ENCODE measurements at regions of chr11 and their contacts with region 1.

Region 1: DNA sequence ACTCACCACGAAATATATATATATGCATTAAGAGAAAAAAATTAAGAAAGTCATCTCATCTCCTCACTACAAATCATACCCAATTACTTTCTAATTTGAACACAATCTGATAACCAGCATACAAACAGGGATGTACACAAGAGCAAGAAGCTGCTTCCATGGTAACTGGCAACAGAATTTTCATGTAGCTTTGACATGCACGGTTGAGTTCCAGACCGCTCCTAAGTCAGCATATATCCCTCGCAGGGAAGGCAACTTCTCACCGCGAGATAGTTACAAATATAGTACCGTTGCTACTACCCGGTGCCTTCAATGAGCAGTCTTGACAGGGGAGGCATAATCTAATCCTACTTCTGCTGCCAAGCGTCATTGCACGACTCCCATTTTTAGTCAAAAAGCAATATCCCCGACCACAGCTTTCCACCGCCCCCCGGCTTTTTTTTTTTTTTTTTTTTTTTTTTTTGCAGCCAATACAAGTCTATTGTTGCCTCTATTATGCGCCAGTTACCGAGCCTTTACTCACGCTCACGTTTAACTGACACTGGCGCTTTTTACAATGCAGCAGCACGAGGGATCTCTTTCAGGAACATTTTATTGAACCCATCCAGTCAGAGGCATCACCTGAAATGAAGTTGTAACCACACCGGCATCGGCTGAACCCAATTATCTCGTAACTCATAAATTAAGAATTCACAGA is 2.2 kb downstream of the CADM1 start:
- DNase-seq: peak in 4 of 10 donors; percentile 16 to 69 (median 18)

Region 2: GRCh38 chr11:115334932-115335788 is 166.9 kb before region 1 on chr11:
- intact Hi-C with region 1: loop called (anchors 2 kb)
- DNase-seq: no peak

Region 3: GRCh38 chr11:115630214-115630613 is 128.2 kb after region 1 on chr11:
- intact Hi-C with region 1: no loop called
- DNase-seq: no peak

Region 4: DNA sequence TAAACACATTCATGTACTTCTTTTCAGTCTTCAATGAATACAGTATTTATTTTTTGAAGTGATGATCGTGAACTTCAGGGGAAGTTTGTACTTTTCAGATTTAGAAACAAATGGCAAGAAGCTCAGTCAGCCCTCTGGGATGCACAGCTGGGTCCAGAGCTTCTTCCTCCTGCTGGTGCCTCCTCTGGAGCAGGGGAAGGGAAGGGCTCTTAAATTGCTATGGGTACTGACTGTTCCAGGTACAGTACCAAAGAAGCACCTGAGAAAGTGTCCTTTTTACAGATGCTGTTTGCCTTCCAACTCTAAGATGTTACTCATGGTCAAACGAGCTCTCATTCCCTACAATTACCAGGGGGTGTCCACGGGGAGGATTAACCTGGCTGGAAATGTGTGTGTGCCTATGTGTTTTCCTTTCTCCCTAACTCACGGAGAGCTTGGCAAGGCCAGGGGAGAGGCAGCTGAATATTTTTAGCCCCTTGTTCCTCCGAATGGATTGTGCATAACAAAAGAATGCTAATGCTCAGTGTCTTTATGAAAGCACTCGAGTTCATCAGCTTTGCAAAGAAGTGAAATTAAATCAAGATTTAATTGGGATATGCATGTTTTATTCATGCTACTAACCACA is 315.9 kb after region 1 on chr11:
- intact Hi-C with region 1: no loop called
- DNase-seq: no peak

Measured in posterior cingulate gyrus (tissue), 11 donors.